K562 (cell line): ENCODE measurements at regions of chr3 and their contacts with region 1.

Region 1: GRCh38 chr3:49411968-49412631 is at the starts of genes RHOA and TCTA:
- DNase-seq: peak; percentile 95 to 99 (median 98)
- ATAC-seq: peak; percentile 91
- H3K4me3 ChIP-seq: peak within 1 kb of the TSS; percentile 91
- H3K27ac ChIP-seq: peak within 1 kb of the TSS; percentile 96
- H3K4me1 ChIP-seq: peaks cover 23 to 32% of the 10 kb centered on the region in 2 experiments; a peak in 4 of 5 replicates
- H3K27me3 ChIP-seq: no peaks in the 10 kb centered on the region
- CTCF ChIP-seq: no peak
- EP300 ChIP-seq: no peak
- POLR2A ChIP-seq: peak; percentile 97
- RAD21 ChIP-seq: no peak
- polyA plus RNA-seq, gene RHOA: 345 to 540 TPM
- polyA plus RNA-seq, gene TCTA: 4.0 to 4.2 TPM

Region 2: DNA sequence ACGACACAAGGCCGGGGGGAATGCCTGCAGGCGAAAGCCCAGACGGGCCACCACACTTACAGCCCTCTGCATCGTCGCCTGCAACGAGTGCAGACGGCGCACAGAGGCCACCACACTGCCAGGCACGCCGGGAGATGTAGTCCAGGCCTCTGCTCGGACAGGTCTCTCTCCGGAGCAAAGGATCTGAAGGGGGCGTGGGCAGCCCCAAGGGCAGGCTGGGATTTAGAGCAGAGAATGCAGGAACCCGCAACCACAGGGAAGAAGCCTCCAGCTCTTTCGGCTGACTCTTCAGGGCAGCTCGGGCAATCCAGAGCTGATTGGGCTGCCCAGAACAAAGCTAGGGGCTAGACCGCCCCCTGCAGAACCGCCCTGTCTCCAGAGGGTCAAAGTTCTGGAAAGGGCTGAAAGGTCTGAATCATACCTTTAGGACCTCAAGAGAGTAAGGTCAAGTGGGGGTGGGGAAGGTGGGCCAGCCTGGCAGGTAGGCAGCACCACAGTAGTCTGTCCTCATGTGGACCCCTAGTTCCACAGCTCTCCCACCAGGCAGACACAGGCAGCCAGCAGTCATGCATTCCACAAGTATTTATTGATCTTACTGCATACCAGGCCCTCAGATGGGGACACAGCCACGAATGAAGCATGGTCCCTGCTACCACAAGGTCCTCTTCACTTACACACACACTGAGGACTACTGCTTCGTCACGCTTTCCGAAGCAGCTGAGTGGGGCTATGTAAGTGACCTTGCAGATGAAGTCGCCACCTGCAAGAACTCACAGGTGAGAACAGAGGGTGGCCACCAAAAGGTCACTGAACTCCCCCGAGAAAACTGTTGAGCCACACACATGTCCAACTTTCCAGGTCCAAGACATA is 10.5 kb after region 1 on chr3 and contains the start of gene AMT:
- CTCF ChIA-PET with region 1: no interaction called
- POLR2A ChIA-PET with region 1: interaction called, 10 read pairs
- in situ Hi-C with region 1: no loop called
- intact Hi-C with region 1: no loop called
- DNase-seq: peak in 1 of 4 experiments; percentile 3
- ATAC-seq: peak; percentile 29; the same call in 2 of the 3 replicates
- H3K4me3 ChIP-seq: no peak within 1 kb of the TSS
- H3K27ac ChIP-seq: no peak within 1 kb of the TSS
- H3K4me1 ChIP-seq: peaks cover 2 to 21% of the 10 kb centered on the region in 2 experiments; a peak in 3 of 5 replicates
- H3K27me3 ChIP-seq: no peaks in the 10 kb centered on the region
- CTCF ChIP-seq: no peak
- EP300 ChIP-seq: no peak
- POLR2A ChIP-seq: no peak
- RAD21 ChIP-seq: no peak
- polyA plus RNA-seq, gene AMT: 0.25 to 0.66 TPM

Region 3: GRCh38 chr3:49607796-49608195 is 195.7 kb after region 1 on chr3:
- CTCF ChIA-PET with region 1: no interaction called
- POLR2A ChIA-PET with region 1: no interaction called
- in situ Hi-C with region 1: no loop called
- intact Hi-C with region 1: no loop called
- DNase-seq: peak in 2 of 4 experiments; percentile 9 to 14
- ATAC-seq: peak; percentile 64
- H3K4me3 ChIP-seq: no peak overlapping the region
- H3K27ac ChIP-seq: no peak overlapping the region
- H3K4me1 ChIP-seq: peaks cover 0 to 2% of the 10 kb centered on the region in 2 experiments; a peak in 2 of 5 replicates
- H3K27me3 ChIP-seq: no peaks in the 10 kb centered on the region
- CTCF ChIP-seq: peak in 2 of 3 experiments; percentile 30 to 54; a peak in 5 of 6 replicates
- EP300 ChIP-seq: no peak
- POLR2A ChIP-seq: no peak
- RAD21 ChIP-seq: no peak

Region 4: GRCh38 chr3:49883998-49884397 is 471.9 kb after region 1 on chr3:
- CTCF ChIA-PET with region 1: no interaction called
- POLR2A ChIA-PET with region 1: no interaction called
- in situ Hi-C with region 1: no loop called
- intact Hi-C with region 1: no loop called
- DNase-seq: no peak
- ATAC-seq: no peak
- H3K4me3 ChIP-seq: no peak overlapping the region
- H3K27ac ChIP-seq: no peak overlapping the region
- H3K4me1 ChIP-seq: peaks cover 16 to 18% of the 10 kb centered on the region in 2 experiments; a peak in 4 of 5 replicates
- H3K27me3 ChIP-seq: no peaks in the 10 kb centered on the region
- CTCF ChIP-seq: no peak
- EP300 ChIP-seq: no peak
- POLR2A ChIP-seq: no peak
- RAD21 ChIP-seq: no peak